HepG2 (cell line): ENCODE measurements at regions of chr17 and their contacts with region 1.

Region 1: DNA sequence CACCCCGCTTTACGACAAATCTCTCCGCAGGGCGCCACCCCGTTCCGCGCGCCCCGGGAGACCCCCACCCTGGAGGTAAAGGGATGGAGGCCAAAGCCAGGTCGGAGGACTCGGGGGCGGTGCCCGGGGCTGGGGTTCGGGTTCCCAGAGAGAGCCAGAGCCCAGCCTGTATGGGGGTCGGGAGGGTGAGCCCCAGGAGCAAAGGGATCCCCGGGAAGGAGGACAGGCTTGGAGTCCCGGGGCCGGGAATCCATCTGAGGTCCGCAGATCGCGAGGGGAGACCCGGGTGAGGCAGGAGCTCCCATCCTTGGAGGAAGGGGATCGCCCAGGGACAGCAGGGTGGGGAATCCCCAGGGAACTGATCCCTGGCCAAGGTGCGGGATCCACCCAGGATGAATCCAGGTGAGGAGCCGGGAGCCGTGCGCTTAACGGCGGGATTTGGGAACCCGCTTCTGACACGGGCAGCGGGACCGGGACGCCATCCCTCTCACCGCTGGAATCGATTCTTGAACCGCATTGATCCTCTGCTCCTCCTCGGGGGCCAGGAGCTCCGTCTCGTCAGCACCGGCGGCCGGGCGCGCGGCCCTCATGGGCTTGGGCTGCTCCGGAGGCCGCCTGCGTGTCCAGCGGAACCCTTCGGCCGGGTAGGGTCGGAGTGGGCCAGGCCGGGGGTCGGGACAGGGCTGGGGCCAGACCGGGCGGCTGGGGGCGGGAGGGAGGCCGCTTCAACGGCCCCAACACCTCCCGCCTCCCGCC is at the start of gene MMD:
- DNase-seq: no peak
- ATAC-seq: peak; percentile 73
- H3K4me3 ChIP-seq: peak within 1 kb of the TSS; percentile 96 to 99 (median 98)
- H3K27ac ChIP-seq: peak within 1 kb of the TSS; percentile 87
- H3K4me1 ChIP-seq: peaks cover 60% of the 10 kb centered on the region
- H3K27me3 ChIP-seq: no peaks in the 10 kb centered on the region; a peak in 1 of 5 replicates
- CTCF ChIP-seq: peak; percentile 10; the same call in 1 of the 2 replicates
- EP300 ChIP-seq: no peak; a peak in 1 of 4 replicates
- POLR2A ChIP-seq: peak in 1 of 2 experiments; percentile 52; a peak in 2 of 4 replicates
- RAD21 ChIP-seq: no peak
- total RNA-seq, gene MMD: 121 and 137 TPM in 2 replicates

Region 2: GRCh38 chr17:55394357-55395021 is 26.9 kb before region 1 on chr17:
- CTCF ChIA-PET with region 1: no interaction called
- POLR2A ChIA-PET with region 1: interaction called, 13 read pairs
- in situ Hi-C with region 1: no loop called
- intact Hi-C with region 1: no loop called
- DNase-seq: peak; percentile 96
- ATAC-seq: peak; percentile 79
- H3K4me3 ChIP-seq: peak overlapping the region in 1 of 3 experiments; percentile 0; a peak in 1 of 6 replicates
- H3K27ac ChIP-seq: peak overlapping the region; percentile 75
- H3K4me1 ChIP-seq: peaks cover 71% of the 10 kb centered on the region
- H3K27me3 ChIP-seq: no peaks in the 10 kb centered on the region
- CTCF ChIP-seq: no peak
- EP300 ChIP-seq: peak; percentile 31 to 91; a peak in 3 of 4 replicates
- POLR2A ChIP-seq: peak in 1 of 2 experiments; percentile 7; a peak in 2 of 4 replicates
- RAD21 ChIP-seq: no peak

Region 3: DNA sequence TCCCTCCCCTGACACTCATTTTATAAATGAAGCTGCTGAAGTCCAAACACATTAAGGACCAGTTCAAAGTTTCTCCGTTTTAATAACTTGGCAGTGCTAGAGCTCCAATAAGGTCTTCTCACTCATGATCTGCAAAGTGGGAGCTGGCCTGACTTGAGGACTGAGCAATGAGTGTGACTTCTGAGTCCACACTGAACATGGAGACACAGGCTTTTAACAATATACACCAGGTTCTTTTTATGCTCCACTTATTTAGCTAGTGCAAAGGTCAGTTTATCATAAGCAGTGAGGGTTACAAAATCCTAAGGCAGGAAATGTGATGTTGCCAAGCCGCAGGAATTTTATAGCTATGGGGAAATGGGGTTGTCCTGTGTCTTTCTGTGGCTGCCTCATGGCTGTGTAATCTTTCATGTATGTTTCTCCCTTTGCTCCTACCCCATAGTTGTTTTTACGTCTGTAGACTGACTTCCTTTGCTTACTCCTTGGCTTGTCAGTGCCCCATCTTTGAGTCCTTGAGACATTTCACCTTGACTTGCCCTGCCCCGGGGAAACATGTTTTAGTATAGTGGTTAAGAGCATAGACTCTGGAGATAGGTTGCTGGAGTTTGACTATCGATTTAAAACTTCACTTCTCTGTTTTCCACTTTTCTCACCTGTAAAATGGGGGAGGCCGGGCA is 12.4 kb after region 1 on chr17:
- CTCF ChIA-PET with region 1: no interaction called
- POLR2A ChIA-PET with region 1: interaction called, 75 read pairs
- in situ Hi-C with region 1: no loop called
- intact Hi-C with region 1: loop called (anchors 1 kb)
- DNase-seq: peak; percentile 99
- ATAC-seq: peak; percentile 89
- H3K4me3 ChIP-seq: peak overlapping the region in 2 of 3 experiments; percentile 6 to 44; a peak in 2 of 6 replicates
- H3K27ac ChIP-seq: peak overlapping the region; percentile 92
- H3K4me1 ChIP-seq: peaks cover 80% of the 10 kb centered on the region
- H3K27me3 ChIP-seq: no peaks in the 10 kb centered on the region
- CTCF ChIP-seq: no peak
- EP300 ChIP-seq: peak; percentile 86 to 95; a peak in 3 of 4 replicates
- POLR2A ChIP-seq: peak; percentile 64 to 93
- RAD21 ChIP-seq: no peak

Region 4: GRCh38 chr17:55452139-55452790 is 30.9 kb after region 1 on chr17:
- CTCF ChIA-PET with region 1: no interaction called
- POLR2A ChIA-PET with region 1: interaction called, 36 read pairs
- in situ Hi-C with region 1: no loop called
- intact Hi-C with region 1: loop called (anchors 5 kb)
- DNase-seq: peak; percentile 85
- ATAC-seq: peak; percentile 64
- H3K4me3 ChIP-seq: no peak overlapping the region
- H3K27ac ChIP-seq: peak overlapping the region; percentile 58
- H3K4me1 ChIP-seq: peaks cover 94% of the 10 kb centered on the region
- H3K27me3 ChIP-seq: no peaks in the 10 kb centered on the region
- CTCF ChIP-seq: no peak
- EP300 ChIP-seq: peak in 1 of 2 experiments; percentile 63; a peak in 1 of 4 replicates
- POLR2A ChIP-seq: no peak
- RAD21 ChIP-seq: no peak

Region 5: DNA sequence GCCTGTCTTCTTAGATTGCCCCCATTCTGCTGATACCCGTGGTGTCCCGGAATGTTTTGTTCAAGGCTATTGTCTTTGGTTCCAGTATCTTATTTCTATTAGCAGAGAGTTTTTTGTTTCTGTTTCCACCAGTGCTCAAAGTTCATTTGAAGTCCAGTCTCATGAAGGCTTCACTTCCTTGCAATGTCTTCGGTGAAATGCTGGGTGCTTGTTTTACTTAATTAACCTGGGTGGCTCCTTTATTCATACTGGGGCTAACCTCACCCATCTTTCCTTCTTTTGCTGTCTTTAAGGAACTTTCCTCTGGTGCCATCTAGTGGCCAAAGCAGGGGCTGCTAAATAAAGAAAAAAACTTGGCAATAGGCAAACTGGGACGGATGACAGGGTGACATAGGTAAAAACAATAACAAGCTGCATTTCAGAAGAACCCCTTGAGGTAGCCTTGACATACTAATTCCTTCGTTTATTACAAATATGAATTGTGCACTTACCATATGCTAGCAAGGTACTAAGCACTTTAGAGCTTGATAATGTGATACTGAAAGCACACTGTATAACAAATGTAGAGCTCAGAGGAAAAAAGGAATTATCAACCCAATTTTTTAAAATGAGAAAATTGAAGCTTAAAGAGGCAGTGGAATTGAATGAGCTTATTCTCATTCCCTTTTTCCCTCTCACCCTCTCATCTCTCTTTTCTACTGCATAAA is 92.7 kb after region 1 on chr17:
- CTCF ChIA-PET with region 1: no interaction called
- POLR2A ChIA-PET with region 1: interaction called, 6 read pairs
- in situ Hi-C with region 1: loop called (anchors 5 kb)
- intact Hi-C with region 1: loop called (anchors 1 kb)
- DNase-seq: peak; percentile 84
- ATAC-seq: peak; percentile 81
- H3K4me3 ChIP-seq: no peak overlapping the region
- H3K27ac ChIP-seq: no peak overlapping the region
- H3K4me1 ChIP-seq: peaks cover 31% of the 10 kb centered on the region
- H3K27me3 ChIP-seq: peaks cover 0 to 1% of the 10 kb centered on the region in 2 experiments; a peak in 1 of 5 replicates
- CTCF ChIP-seq: peak; percentile 93
- EP300 ChIP-seq: 0 out of 4 replicates have a peak, but pooled peaks of 1 of the 2 experiments have one; percentile 12
- POLR2A ChIP-seq: no peak
- RAD21 ChIP-seq: peak; percentile 90

Region 6: DNA sequence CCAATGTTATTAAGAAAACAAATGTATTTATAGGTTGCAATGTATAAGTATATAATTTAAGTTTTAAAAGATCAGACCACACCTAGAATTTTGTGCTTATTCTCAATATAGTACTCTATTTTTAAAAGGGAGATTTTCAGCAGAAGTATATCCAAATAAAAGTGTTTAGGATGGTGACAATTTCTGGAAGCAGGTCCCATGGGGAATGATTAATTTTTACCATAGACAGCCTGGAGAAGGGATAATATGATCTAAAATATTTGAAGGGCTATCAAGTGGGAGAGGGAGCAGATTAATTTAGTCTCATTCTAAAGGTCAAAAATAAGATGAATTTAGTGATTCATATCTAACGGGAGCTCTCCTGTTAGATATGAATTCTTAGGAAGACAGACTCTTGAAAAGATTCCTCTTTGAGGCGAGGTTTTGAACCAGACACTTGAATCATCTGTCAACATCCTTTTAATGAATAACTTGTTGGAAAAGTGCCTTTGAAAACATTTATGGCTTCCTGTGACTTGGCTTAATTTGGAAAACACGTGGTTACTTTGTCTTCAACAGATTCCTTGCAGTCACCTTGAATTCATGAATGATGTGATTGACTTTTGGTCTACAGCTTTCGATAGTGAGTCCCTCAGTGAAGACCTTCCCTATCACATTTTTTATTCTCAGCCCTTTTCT is 119.2 kb after region 1 on chr17:
- CTCF ChIA-PET with region 1: no interaction called
- POLR2A ChIA-PET with region 1: no interaction called
- in situ Hi-C with region 1: no loop called
- intact Hi-C with region 1: no loop called
- DNase-seq: no peak
- ATAC-seq: no peak
- H3K4me3 ChIP-seq: no peak overlapping the region
- H3K27ac ChIP-seq: no peak overlapping the region
- H3K4me1 ChIP-seq: no peaks in the 10 kb centered on the region
- H3K27me3 ChIP-seq: peaks cover 0 to 1% of the 10 kb centered on the region in 2 experiments; a peak in 1 of 5 replicates
- CTCF ChIP-seq: no peak
- EP300 ChIP-seq: no peak
- POLR2A ChIP-seq: no peak
- RAD21 ChIP-seq: no peak